ENCODE measurements at regions of chr1 and their contacts with region 1.

Region 1: DNA sequence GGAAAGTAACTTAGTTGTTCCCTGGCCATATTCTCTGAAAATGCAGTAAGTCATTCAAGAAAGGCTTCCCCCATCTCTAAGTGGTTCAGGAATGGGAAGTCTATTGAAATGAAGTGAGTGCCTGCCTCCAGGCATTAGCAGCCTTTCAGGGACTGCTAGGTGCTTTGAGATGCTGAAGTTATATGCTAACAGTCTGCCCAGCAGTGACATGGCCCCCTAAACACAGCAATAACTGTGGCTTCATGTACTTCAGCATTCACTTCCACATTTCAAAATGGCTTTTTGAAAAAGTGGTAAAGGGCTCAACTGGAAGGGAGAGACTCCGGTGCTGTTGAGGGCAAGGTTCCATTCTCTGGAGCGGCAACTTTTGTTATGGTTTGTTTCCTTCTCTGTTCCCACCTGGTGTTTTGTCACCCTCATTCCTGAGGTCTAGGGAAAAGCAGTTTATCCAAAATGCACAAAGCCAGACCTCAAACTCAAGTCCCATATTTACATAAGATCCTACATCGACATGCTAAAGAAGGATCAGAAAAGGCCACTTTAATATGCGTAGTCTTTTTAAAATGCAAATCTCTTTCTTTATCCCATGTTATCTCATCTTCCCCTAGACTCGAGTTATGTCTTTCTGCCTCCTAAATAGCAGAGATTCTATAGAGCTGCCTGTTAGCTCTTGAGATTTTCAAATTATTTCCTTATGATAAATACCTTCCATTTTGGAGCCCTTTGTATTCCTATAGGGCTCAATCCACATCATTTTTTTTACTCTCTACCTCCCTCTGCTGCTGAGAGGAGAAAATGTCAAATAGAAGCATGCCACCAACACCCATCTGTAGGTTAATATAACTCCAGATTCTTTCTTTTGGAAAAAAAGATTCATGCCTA is 34.2 kb upstream of the LRRC8C start:
- DNase-seq: peak; percentile 55
- H3K4me3 ChIP-seq: no peak overlapping the region
- H3K27ac ChIP-seq: no peak overlapping the region; a peak in 1 of 4 replicates
- H3K4me1 ChIP-seq: peaks cover 0 to 4% of the 10 kb centered on the region in 2 experiments; a peak in 2 of 4 replicates
- H3K27me3 ChIP-seq: no peaks in the 10 kb centered on the region
- CTCF ChIP-seq: peak; percentile 75
- EP300 ChIP-seq: no peak
- RAD21 ChIP-seq: peak; percentile 80

Region 2: GRCh38 chr1:89483010-89483756 is 115.5 kb before region 1 on chr1:
- CTCF ChIA-PET with region 1: interaction called, 45 read pairs
- POLR2A ChIA-PET with region 1: no interaction called
- DNase-seq: peak; percentile 65
- H3K4me3 ChIP-seq: no peak overlapping the region
- H3K27ac ChIP-seq: no peak overlapping the region
- H3K4me1 ChIP-seq: peaks cover 0 to 5% of the 10 kb centered on the region in 2 experiments; a peak in 1 of 4 replicates
- H3K27me3 ChIP-seq: no peaks in the 10 kb centered on the region
- CTCF ChIP-seq: peak; percentile 82
- EP300 ChIP-seq: no peak
- RAD21 ChIP-seq: peak; percentile 88

Region 3: DNA sequence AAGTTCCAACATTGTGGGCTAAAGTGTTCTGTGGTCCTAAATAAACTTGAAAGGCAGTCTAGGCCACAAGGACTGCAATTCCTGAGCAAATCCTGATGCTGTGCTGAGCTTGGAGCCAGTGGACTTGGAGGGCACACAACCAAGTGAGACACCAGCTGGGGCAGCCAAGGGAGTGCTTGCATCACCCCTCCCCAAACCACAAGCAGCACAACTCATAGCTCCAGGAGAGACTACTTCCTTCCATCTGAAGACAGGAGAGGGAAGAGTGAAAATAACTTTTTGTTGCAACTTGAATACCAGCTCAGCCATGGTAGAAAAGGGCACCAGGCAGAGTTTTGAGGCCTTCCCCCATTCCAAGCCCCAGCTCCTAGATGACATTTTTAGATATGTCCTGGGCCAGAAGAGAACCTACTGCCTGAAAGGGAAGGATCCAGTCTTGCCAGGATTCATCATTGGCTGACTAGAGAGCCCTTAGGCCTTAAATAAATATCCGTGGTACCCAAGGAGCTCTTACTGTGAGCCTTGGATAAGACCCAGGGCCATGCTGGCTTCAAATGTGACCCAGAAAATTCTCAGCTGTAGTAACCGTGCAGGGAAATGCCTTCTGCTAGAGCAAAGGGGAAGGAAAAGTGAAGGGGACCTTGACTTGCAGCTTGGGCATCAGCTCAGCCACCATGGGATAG is 109.5 kb before region 1 on chr1:
- CTCF ChIA-PET with region 1: interaction called, 45 read pairs
- POLR2A ChIA-PET with region 1: no interaction called
- DNase-seq: no peak
- H3K4me3 ChIP-seq: no peak overlapping the region
- H3K27ac ChIP-seq: no peak overlapping the region
- H3K4me1 ChIP-seq: peaks cover 0 to 5% of the 10 kb centered on the region in 2 experiments; a peak in 1 of 4 replicates
- H3K27me3 ChIP-seq: no peaks in the 10 kb centered on the region
- CTCF ChIP-seq: no peak
- EP300 ChIP-seq: no peak
- RAD21 ChIP-seq: no peak

Region 4: DNA sequence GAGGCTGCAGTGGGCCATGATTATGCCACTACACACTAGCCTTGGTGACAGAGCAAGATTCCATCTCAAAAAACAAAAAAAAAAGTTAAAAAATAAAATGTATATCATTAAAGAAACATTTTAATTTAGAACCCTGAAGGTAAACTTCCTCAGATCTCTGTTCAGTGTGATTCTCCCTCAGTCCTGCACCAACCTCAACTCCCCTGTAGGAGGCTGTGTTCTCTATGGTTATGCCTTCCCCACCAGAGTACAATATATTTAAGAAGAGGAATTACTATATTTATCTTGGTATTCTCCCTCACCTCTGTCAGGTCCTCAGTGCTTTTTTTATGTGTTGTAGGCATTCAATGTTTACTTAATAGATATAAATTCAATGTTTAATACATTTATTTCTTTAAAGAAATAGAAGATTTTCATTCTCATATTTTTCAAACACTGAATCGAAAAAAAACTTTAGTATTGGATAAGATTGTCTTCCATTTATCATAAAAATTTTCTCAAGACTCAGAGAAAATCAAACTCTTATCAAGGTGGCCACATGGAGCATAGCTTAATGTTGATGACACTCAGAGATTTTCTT is 78.8 kb before region 1 on chr1:
- CTCF ChIA-PET with region 1: interaction called, 10 read pairs
- POLR2A ChIA-PET with region 1: no interaction called
- DNase-seq: peak; percentile 54
- H3K4me3 ChIP-seq: no peak overlapping the region
- H3K27ac ChIP-seq: no peak overlapping the region
- H3K4me1 ChIP-seq: peaks cover 3 to 7% of the 10 kb centered on the region in 2 experiments; a peak in 2 of 4 replicates
- H3K27me3 ChIP-seq: no peaks in the 10 kb centered on the region
- CTCF ChIP-seq: peak; percentile 58
- EP300 ChIP-seq: no peak
- RAD21 ChIP-seq: peak; percentile 75

Region 5: GRCh38 chr1:89581859-89582258 is 16.8 kb before region 1 on chr1:
- CTCF ChIA-PET with region 1: interaction called, 21 read pairs
- POLR2A ChIA-PET with region 1: interaction called, 4 read pairs
- DNase-seq: no peak
- H3K4me3 ChIP-seq: no peak overlapping the region
- H3K27ac ChIP-seq: no peak overlapping the region
- H3K4me1 ChIP-seq: peaks cover 3 to 4% of the 10 kb centered on the region in 2 experiments; a peak in 3 of 4 replicates
- H3K27me3 ChIP-seq: no peaks in the 10 kb centered on the region
- CTCF ChIP-seq: no peak
- EP300 ChIP-seq: no peak
- RAD21 ChIP-seq: no peak

Region 6: DNA sequence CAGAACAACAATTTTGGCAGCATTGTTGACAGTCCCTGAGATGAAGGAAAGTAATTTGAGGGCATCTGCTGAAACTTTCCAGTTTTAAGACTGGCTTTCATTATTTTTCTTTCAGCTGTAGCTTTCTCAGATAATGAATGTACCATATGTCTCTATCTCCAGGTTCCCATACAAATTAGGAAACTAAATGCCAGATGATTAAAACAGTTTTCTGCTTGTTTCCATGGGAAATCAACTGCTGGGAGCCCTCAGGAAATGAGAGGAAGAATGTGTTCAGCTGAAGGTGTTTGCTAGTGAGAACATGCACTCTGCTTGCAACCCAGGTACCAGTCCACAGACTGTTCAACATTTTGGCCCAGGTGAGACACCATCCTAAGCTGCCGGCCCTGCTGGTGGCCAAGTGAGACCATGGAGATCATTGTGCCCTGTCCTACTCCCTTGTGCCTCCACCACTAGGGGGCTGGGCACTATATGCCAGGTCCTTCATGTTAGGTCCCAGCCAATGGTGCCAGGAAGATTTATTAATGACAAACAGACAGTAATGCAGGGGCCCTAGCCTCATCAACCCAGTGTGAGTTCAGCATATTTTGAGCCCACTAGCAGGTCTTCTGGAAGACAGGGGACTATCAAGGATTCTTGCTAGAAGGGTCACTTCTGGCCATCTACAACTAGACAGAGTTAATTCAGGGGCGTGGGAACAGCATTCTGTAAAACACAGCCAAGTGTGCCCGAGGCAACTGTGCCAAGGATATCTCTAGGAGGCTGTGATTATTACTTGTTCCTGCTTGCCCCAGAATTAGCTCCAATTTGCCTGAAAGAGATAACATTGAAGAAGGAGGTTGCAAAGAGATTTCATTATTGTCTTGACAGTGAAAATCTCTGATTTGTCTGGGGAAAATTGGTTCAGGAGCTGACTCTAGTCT is 17.2 kb after region 1 on chr1:
- CTCF ChIA-PET with region 1: interaction called, 43 read pairs
- POLR2A ChIA-PET with region 1: no interaction called
- DNase-seq: peak; percentile 63
- H3K4me3 ChIP-seq: no peak overlapping the region
- H3K27ac ChIP-seq: peak overlapping the region in 1 of 2 experiments; percentile 77; a peak in 2 of 4 replicates
- H3K4me1 ChIP-seq: peaks cover 0 to 13% of the 10 kb centered on the region in 2 experiments; a peak in 1 of 4 replicates
- H3K27me3 ChIP-seq: no peaks in the 10 kb centered on the region
- CTCF ChIP-seq: peak; percentile 49
- EP300 ChIP-seq: no peak; a peak in 1 of 4 replicates
- RAD21 ChIP-seq: peak; percentile 17

Region 7: DNA sequence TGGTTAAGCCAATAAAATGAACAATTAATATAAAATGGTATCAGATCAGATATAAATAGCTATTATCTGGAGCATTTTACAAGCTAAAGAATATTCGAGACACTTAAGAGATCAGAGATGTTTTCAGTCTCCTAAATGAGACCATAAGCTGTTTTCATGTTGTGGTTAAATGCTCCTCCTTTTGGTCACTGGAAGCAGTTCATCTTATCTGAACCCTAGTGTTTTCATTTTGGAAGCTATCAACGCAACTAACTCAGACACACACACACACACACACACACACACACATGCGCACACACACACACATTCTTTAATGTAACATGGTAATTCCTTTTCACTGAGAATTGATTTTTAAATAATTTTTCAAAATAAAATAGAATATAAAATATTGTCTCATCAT is 24.2 kb after region 1 on chr1:
- CTCF ChIA-PET with region 1: interaction called, 43 read pairs
- POLR2A ChIA-PET with region 1: no interaction called
- DNase-seq: peak; percentile 31
- H3K4me3 ChIP-seq: no peak overlapping the region
- H3K27ac ChIP-seq: no peak overlapping the region
- H3K4me1 ChIP-seq: no peaks in the 10 kb centered on the region; a peak in 2 of 4 replicates
- H3K27me3 ChIP-seq: no peaks in the 10 kb centered on the region
- CTCF ChIP-seq: peak; percentile 36
- EP300 ChIP-seq: no peak
- RAD21 ChIP-seq: peak; percentile 61

Region 8: DNA sequence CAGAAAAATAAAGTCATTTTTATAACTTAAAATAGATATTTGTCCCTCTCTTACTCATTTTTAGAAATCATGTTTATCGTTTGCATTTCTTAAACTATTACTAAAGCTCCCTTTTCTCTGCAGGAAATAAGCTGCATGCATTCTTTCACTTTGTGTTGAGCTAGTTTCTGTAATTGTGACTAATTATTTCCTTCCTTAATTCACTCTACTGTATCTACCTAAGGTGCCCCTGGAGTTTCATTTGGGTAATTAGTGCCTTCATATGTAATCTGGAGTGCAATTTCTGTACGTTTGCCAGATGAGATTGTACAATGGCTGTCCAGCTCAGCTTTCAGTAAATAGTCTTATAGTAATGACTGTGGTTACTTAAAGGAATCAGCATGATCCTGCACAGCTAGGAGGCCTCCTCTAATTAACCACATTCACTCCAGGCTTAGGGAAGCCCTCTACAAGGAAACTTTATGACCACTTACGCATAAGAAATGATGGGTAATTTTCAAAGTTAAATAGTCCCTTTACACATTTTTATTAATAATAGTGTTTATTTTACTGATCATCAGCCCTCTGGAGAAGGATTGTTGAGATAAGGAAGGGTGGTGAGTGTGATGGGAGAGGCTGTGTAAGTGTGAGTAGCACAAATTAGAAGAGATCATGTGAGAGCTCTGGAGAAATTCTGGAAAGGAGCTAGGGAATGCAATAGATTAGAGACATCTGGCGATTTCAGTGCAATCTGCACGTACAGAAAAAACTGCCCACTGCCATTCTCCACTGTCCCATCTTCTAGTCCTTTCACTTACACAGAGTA is 121.0 kb after region 1 on chr1:
- CTCF ChIA-PET with region 1: no interaction called
- POLR2A ChIA-PET with region 1: no interaction called
- DNase-seq: peak; percentile 41
- H3K4me3 ChIP-seq: no peak overlapping the region
- H3K27ac ChIP-seq: peak overlapping the region; percentile 4 to 58; a peak in 3 of 4 replicates
- H3K4me1 ChIP-seq: peaks cover 27 to 41% of the 10 kb centered on the region in 2 experiments
- H3K27me3 ChIP-seq: no peaks in the 10 kb centered on the region
- CTCF ChIP-seq: no peak
- EP300 ChIP-seq: 0 out of 4 replicates have a peak, but pooled peaks of 1 of the 2 experiments have one; percentile 26
- RAD21 ChIP-seq: peak; percentile 24